ENCODE measurements at regions of chr9 and their contacts with region 1.

Region 1: DNA sequence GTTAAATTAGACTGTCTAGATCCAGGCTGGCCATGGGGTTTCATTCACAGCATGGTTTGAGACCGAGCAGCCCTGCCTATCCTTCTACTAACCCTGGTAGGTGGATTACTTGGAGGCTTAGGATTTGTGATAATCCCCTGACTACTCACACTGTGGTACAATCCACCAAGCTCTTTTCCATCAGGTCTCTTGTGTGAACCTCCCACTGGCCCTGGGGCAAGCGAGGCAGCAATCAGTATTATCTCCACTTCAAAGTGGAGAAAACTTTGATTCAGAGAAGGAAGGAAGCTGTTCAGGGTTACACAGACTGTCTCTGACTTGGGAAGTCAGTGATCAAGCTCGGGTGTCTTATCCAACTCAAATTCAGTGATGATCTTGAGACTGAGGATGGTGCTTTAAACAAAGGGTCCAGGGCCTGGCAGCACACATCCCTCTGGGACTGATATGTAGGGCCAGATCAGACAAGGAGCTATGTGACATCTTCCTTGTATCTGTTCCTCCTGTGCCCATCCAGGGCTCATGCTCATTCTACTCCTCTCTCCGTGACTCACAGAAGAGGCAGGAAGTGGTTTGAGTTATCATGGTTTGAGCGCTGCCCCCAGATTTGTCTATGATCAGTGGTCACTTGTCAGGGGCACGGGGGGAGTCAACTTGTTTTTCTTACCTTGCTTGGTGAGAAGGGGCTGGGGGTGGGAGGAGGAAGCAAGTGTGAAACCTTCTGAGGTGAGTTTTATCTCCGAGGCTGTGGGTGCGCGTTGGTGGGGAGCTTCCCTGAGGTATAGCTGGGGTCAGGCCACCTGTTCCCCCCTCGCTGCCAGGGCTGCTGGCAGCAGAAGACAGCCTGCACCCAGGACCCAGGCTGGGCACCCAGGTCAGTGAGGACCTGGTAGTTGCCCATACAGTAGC is 48.6 kb downstream of the RGS3 start:
- DNase-seq: peak; percentile 34 to 85 (median 64)
- ATAC-seq: peak; percentile 66 to 68
- H3K4me3 Mint-ChIP-seq: peak overlapping the region; percentile 62 to 87 (median 74)
- H3K27ac Mint-ChIP-seq: peak overlapping the region; percentile 93 to 98 (median 95)
- H3K4me1 Mint-ChIP-seq: peaks cover 50 to 78% (median 71%) of the 10 kb centered on the region in 4 donors
- H3K27me3 Mint-ChIP-seq: no peaks in the 10 kb centered on the region

Region 2: GRCh38 chr9:113523421-113524236 is 11.5 kb after region 1 on chr9:
- POLR2A ChIA-PET with region 1: interaction called, 119 read pairs
- DNase-seq: peak in 9 of 10 donors; percentile 21 to 71 (median 45)
- ATAC-seq: peak; percentile 50 to 64
- H3K4me3 Mint-ChIP-seq: peak overlapping the region; percentile 69 to 91 (median 82)
- H3K27ac Mint-ChIP-seq: peak overlapping the region; percentile 74 to 98 (median 96)
- H3K4me1 Mint-ChIP-seq: peaks cover 53 to 97% (median 93%) of the 10 kb centered on the region in 4 donors
- H3K27me3 Mint-ChIP-seq: no peaks in the 10 kb centered on the region

Region 3: DNA sequence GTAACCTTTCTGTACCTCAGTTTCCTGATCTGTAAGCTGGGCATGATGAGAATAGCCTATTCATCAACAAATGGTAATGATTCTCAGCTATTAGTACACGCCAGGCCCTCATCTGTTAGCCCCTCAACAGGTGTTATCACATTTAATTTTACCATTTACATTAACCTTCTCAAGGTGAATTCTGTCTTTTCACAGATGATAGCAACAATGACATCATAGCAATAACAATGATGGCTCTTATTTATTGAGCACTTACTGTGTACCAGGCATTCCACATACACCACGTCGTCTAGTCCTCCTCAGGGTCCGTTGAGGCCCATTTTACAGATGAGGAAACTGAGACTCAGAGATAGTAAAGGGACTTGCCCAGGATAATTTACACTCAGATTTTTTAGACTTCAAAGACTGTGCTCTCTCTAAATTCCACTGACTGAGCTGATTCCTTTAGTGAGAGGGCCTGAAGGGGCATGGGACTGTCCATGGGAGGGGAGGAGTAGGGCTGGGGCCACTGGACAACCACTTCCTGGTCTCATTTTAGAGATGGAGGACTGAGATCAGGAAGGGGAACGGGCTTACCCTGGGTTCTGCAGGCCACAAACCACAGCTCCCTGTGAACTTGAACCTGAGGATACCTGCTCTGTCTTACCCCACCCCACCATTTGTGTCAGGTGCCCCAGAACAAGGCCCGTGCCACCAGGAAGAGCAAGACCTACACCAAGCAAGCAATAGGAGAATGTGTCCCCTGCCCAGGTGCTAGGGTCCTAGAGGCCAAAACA is 47.8 kb after region 1 on chr9:
- POLR2A ChIA-PET with region 1: no interaction called
- DNase-seq: no peak
- ATAC-seq: no peak
- H3K4me3 Mint-ChIP-seq: no peak overlapping the region
- H3K27ac Mint-ChIP-seq: peak overlapping the region in 8 of 10 donors; percentile 11 to 91 (median 54)
- H3K4me1 Mint-ChIP-seq: peaks cover 27 to 58% (median 55%) of the 10 kb centered on the region in 4 donors
- H3K27me3 Mint-ChIP-seq: no peaks in the 10 kb centered on the region

Region 4: GRCh38 chr9:113578882-113579282 is 66.8 kb after region 1 on chr9:
- POLR2A ChIA-PET with region 1: interaction called, 72 read pairs
- DNase-seq: peak; percentile 46 to 87 (median 69)
- ATAC-seq: peak; percentile 69
- H3K4me3 Mint-ChIP-seq: peak overlapping the region; percentile 49 to 92 (median 80)
- H3K27ac Mint-ChIP-seq: peak overlapping the region; percentile 87 to 97 (median 95)
- H3K4me1 Mint-ChIP-seq: peaks cover 48 to 88% (median 84%) of the 10 kb centered on the region in 4 donors
- H3K27me3 Mint-ChIP-seq: no peaks in the 10 kb centered on the region

Measured in naive thymus-derived CD8-positive, alpha-beta T cell (primary cell).